ENCODE measurements at regions of chr7 and their contacts with region 1.

Region 1: GRCh38 chr7:6422926-6423632 is 24.7 kb downstream of the DAGLB start:
- DNase-seq: no peak
- ATAC-seq: no peak
- H3K4me3 ChIP-seq: no peak overlapping the region
- H3K4me3 Mint-ChIP-seq: no peak overlapping the region
- H3K27ac ChIP-seq: no peak overlapping the region
- H3K27ac Mint-ChIP-seq: no peak overlapping the region
- H3K4me1 ChIP-seq: no peaks in the 10 kb centered on the region
- H3K4me1 Mint-ChIP-seq: no peaks in the 10 kb centered on the region
- H3K27me3 ChIP-seq: no peaks in the 10 kb centered on the region
- H3K27me3 Mint-ChIP-seq: no peaks in the 10 kb centered on the region
- CTCF ChIP-seq: no peak

Region 2: GRCh38 chr7:6385110-6385971 is 37.7 kb before region 1 on chr7:
- CTCF ChIA-PET with region 1: no interaction called
- POLR2A ChIA-PET with region 1: interaction called, 11 read pairs
- intact Hi-C with region 1: no loop called
- DNase-seq: no peak
- ATAC-seq: no peak
- H3K4me3 ChIP-seq: no peak overlapping the region
- H3K4me3 Mint-ChIP-seq: no peak overlapping the region
- H3K27ac ChIP-seq: peak overlapping the region in 1 of 2 donors; percentile 63
- H3K27ac Mint-ChIP-seq: peak overlapping the region; percentile 1
- H3K4me1 ChIP-seq: peaks cover 39 to 55% of the 10 kb centered on the region in 2 donors
- H3K4me1 Mint-ChIP-seq: peaks cover 58% of the 10 kb centered on the region
- H3K27me3 ChIP-seq: no peaks in the 10 kb centered on the region
- H3K27me3 Mint-ChIP-seq: no peaks in the 10 kb centered on the region
- CTCF ChIP-seq: no peak

Region 3: GRCh38 chr7:6409991-6410693 is 12.9 kb before region 1 on chr7:
- CTCF ChIA-PET with region 1: interaction called, 3 read pairs
- POLR2A ChIA-PET with region 1: no interaction called
- intact Hi-C with region 1: loop called (anchors 2 kb)
- DNase-seq: no peak
- ATAC-seq: no peak
- H3K4me3 ChIP-seq: no peak overlapping the region
- H3K4me3 Mint-ChIP-seq: no peak overlapping the region
- H3K27ac ChIP-seq: no peak overlapping the region
- H3K27ac Mint-ChIP-seq: no peak overlapping the region
- H3K4me1 ChIP-seq: no peaks in the 10 kb centered on the region
- H3K4me1 Mint-ChIP-seq: no peaks in the 10 kb centered on the region
- H3K27me3 ChIP-seq: no peaks in the 10 kb centered on the region
- H3K27me3 Mint-ChIP-seq: no peaks in the 10 kb centered on the region
- CTCF ChIP-seq: no peak

Measured in B cell (primary cell).